CD8-positive, alpha-beta T cell (primary cell): ENCODE measurements at regions of chr4 and their contacts with region 1.

Region 1: GRCh38 chr4:105708530-105709391 is at the starts of genes GSTCD and INTS12:
- DNase-seq: peak; percentile 82 to 94 (median 88)
- ATAC-seq: peak; percentile 91
- H3K4me3 ChIP-seq: peak within 1 kb of the TSS; percentile 69 to 96
- H3K4me3 Mint-ChIP-seq: peak within 1 kb of the TSS; percentile 100
- H3K27ac ChIP-seq: peak within 1 kb of the TSS; percentile 68 to 79
- H3K27ac Mint-ChIP-seq: peak within 1 kb of the TSS; percentile 98
- H3K4me1 ChIP-seq: peaks cover 24% of the 10 kb centered on the region
- H3K4me1 Mint-ChIP-seq: peaks cover 36% of the 10 kb centered on the region
- H3K27me3 ChIP-seq: no peaks in the 10 kb centered on the region
- H3K27me3 Mint-ChIP-seq: no peaks in the 10 kb centered on the region
- CTCF ChIP-seq: no peak
- total RNA-seq, gene GSTCD: 2.9 to 5.8 TPM
- total RNA-seq, gene INTS12: 23.9 to 24.8 TPM

Region 2: GRCh38 chr4:104930298-104930697 is 778.5 kb before region 1 on chr4:
- CTCF ChIA-PET with region 1: no interaction called
- POLR2A ChIA-PET with region 1: no interaction called
- intact Hi-C with region 1: loop called in 1 of 2 experiments (anchors 5 kb)
- DNase-seq: peak in 2 of 9 experiments; percentile 3 to 27
- ATAC-seq: no peak
- H3K4me3 ChIP-seq: peak overlapping the region in 1 of 2 experiments; percentile 28
- H3K4me3 Mint-ChIP-seq: no peak overlapping the region
- H3K27ac ChIP-seq: peak overlapping the region in 1 of 2 experiments; percentile 33
- H3K27ac Mint-ChIP-seq: peak overlapping the region; percentile 79
- H3K4me1 ChIP-seq: peaks cover 25% of the 10 kb centered on the region
- H3K4me1 Mint-ChIP-seq: peaks cover 51% of the 10 kb centered on the region
- H3K27me3 ChIP-seq: no peaks in the 10 kb centered on the region
- H3K27me3 Mint-ChIP-seq: no peaks in the 10 kb centered on the region
- CTCF ChIP-seq: no peak

Region 3: GRCh38 chr4:106315968-106316772 is 607.4 kb after region 1 on chr4 and contains the starts of genes AIMP1 and TBCK:
- CTCF ChIA-PET with region 1: no interaction called
- POLR2A ChIA-PET with region 1: no interaction called
- intact Hi-C with region 1: loop called (anchors 5 to 10 kb)
- DNase-seq: peak; percentile 81 to 95 (median 90)
- ATAC-seq: peak; percentile 85
- H3K4me3 ChIP-seq: peak within 1 kb of the TSS; percentile 72 to 85
- H3K4me3 Mint-ChIP-seq: no peak within 1 kb of the TSS
- H3K27ac ChIP-seq: peak within 1 kb of the TSS; percentile 89 to 96
- H3K27ac Mint-ChIP-seq: no peak within 1 kb of the TSS
- H3K4me1 ChIP-seq: peaks cover 19% of the 10 kb centered on the region
- H3K4me1 Mint-ChIP-seq: peaks cover 42% of the 10 kb centered on the region
- H3K27me3 ChIP-seq: no peaks in the 10 kb centered on the region
- H3K27me3 Mint-ChIP-seq: no peaks in the 10 kb centered on the region
- CTCF ChIP-seq: no peak
- total RNA-seq, gene AIMP1: 69.3 to 79.2 TPM
- total RNA-seq, gene TBCK: 17.4 to 20.4 TPM